A549 (cell line): ENCODE measurements at regions of chr17 and their contacts with region 1.

Region 1: DNA sequence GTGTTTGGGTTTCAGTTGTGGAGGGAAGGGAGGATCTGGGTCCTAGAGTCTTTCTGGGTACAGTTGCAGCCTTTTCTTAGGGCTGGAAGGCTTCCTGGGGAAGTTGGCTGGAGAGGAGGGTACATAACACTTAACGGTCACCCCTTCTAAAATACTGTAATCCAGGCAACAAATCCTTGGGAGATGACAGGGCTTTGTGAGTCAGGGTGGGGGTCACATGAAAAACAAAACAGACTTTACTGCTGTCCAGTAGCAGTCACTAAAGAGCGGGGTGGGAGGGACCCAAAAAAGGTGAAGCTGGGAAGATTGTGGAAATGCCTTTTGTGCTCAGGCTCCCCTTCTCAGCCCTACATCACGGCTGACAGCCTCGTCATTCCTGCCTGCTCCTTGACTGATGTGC is 6.3 kb downstream of the SAP30BP start:
- DNase-seq: no peak
- ATAC-seq: peak in 1 of 2 experiments; percentile 47; a peak in 3 of 6 replicates
- H3K4me3 ChIP-seq: no peak overlapping the region
- H3K27ac ChIP-seq: no peak overlapping the region
- H3K4me1 ChIP-seq: peaks cover 23% of the 10 kb centered on the region
- CTCF ChIP-seq: no peak
- EP300 ChIP-seq: no peak
- POLR2A ChIP-seq: no peak
- RAD21 ChIP-seq: no peak

Region 2: GRCh38 chr17:75625813-75626486 is 47.5 kb before region 1 on chr17:
- CTCF ChIA-PET with region 1: interaction called, 2,254 read pairs
- POLR2A ChIA-PET with region 1: no interaction called
- DNase-seq: peak; percentile 37 to 82
- ATAC-seq: peak; percentile 54 to 84
- H3K4me3 ChIP-seq: no peak overlapping the region
- H3K27ac ChIP-seq: no peak overlapping the region
- H3K4me1 ChIP-seq: no peaks in the 10 kb centered on the region; the same call in 2 of the 3 replicates
- CTCF ChIP-seq: peak; percentile 64
- EP300 ChIP-seq: no peak
- POLR2A ChIP-seq: no peak
- RAD21 ChIP-seq: peak; percentile 52 to 55; a peak in 4 of 5 replicates

Region 3: GRCh38 chr17:75645889-75646637 is 27.4 kb before region 1 on chr17:
- CTCF ChIA-PET with region 1: interaction called, 2,254 read pairs
- POLR2A ChIA-PET with region 1: no interaction called
- DNase-seq: peak; percentile 94 to 99
- ATAC-seq: peak; percentile 90 to 96
- H3K4me3 ChIP-seq: peak overlapping the region; percentile 25; the same call in 1 of the 3 replicates
- H3K27ac ChIP-seq: peak overlapping the region; percentile 91 to 92
- H3K4me1 ChIP-seq: peaks cover 31% of the 10 kb centered on the region
- CTCF ChIP-seq: no peak
- EP300 ChIP-seq: no peak
- POLR2A ChIP-seq: peak; percentile 38; the same call in 1 of the 2 replicates
- RAD21 ChIP-seq: no peak; a peak in 1 of 5 replicates

Region 4: DNA sequence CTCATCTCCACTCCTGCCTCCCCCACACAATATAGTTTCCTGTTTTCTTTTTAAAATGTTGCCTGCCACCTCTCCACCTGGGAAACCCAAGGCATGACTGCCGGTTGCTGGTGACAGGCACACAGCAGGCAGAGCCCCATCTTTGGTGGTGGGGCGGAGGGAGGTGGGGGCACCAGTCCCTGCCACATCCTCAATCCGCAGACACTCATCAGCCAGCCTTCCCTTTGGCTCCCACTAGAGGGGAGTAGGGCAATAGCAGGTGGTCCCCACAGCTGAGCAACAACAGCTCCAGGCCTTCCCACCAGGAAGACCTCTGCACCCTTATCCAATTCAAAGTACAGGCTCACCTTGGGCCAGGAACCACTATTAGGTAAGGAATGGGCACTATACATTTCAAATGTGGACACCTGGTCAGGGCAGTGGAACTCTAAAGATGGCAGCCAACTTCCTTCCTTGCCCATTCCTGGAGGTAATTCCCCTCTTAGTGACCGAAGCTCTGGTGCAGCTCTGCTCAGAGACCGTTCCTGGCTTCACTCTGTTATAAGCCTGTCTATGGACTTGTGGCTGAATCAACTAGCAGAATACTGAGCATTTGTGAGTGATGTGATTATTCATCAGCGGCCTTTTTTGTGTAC is 20.5 kb before region 1 on chr17:
- CTCF ChIA-PET with region 1: interaction called, 2,254 read pairs
- POLR2A ChIA-PET with region 1: no interaction called
- DNase-seq: peak; percentile 58 to 60
- ATAC-seq: peak; percentile 86 to 93
- H3K4me3 ChIP-seq: no peak overlapping the region
- H3K27ac ChIP-seq: 0 out of 6 replicates have a peak overlapping the region, but pooled peaks of 1 of the 2 experiments have one; percentile 11
- H3K4me1 ChIP-seq: no peaks in the 10 kb centered on the region
- CTCF ChIP-seq: peak; percentile 70
- EP300 ChIP-seq: no peak
- POLR2A ChIP-seq: no peak
- RAD21 ChIP-seq: peak; percentile 55 to 79; a peak in 4 of 5 replicates

Region 5: GRCh38 chr17:75661531-75661930 is 12.0 kb before region 1 on chr17:
- CTCF ChIA-PET with region 1: interaction called, 2,254 read pairs
- POLR2A ChIA-PET with region 1: no interaction called
- DNase-seq: no peak
- ATAC-seq: no peak
- H3K4me3 ChIP-seq: no peak overlapping the region
- H3K27ac ChIP-seq: no peak overlapping the region
- H3K4me1 ChIP-seq: peaks cover 7% of the 10 kb centered on the region
- CTCF ChIP-seq: no peak
- EP300 ChIP-seq: no peak
- POLR2A ChIP-seq: no peak
- RAD21 ChIP-seq: no peak

Region 6: DNA sequence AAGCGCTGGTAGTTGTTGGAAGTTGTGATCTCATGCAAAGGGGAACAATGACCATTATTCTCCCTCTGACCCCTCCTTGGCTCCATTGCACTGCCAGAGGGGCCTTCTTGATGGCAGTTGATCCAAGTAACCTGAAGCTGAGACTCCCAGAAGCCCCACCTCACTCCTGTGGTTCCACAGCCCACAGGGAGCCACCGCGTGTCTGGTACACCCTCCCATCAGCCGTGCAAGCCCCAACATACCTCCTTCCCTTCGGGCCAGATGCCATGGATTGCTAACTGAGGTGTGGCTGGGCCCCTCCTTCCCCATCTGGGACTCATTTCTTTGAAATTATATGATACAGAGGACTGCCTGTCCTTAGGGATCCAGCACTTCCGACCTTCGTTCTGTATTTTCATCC is 11.4 kb after region 1 on chr17:
- CTCF ChIA-PET with region 1: interaction called, 29 read pairs
- POLR2A ChIA-PET with region 1: no interaction called
- DNase-seq: peak in 1 of 2 experiments; percentile 82
- ATAC-seq: peak; percentile 9 to 69; a peak in 4 of 6 replicates
- H3K4me3 ChIP-seq: no peak overlapping the region
- H3K27ac ChIP-seq: peak overlapping the region; percentile 86 to 93
- H3K4me1 ChIP-seq: peaks cover 95% of the 10 kb centered on the region
- CTCF ChIP-seq: no peak
- EP300 ChIP-seq: no peak
- POLR2A ChIP-seq: no peak
- RAD21 ChIP-seq: no peak

Region 7: GRCh38 chr17:75693500-75694481 is 20.3 kb after region 1 on chr17:
- CTCF ChIA-PET with region 1: interaction called, 36 read pairs
- POLR2A ChIA-PET with region 1: no interaction called
- DNase-seq: peak; percentile 65 to 85
- ATAC-seq: peak; percentile 70 to 75
- H3K4me3 ChIP-seq: no peak overlapping the region; the same call in 2 of the 3 replicates
- H3K27ac ChIP-seq: peak overlapping the region; percentile 93
- H3K4me1 ChIP-seq: peaks cover 100% of the 10 kb centered on the region
- CTCF ChIP-seq: no peak; the same call in 2 of the 3 replicates
- EP300 ChIP-seq: peak in 1 of 2 experiments; percentile 40; a peak in 2 of 5 replicates
- POLR2A ChIP-seq: no peak
- RAD21 ChIP-seq: peak; percentile 36 to 54; a peak in 3 of 5 replicates